HepG2 (cell line): ENCODE measurements at regions of chr11 and their contacts with region 1.

Region 1: GRCh38 chr11:102007567-102008437 is 39.4 kb upstream of the CFAP300 start:
- DNase-seq: peak; percentile 88
- ATAC-seq: peak; percentile 92
- H3K4me3 ChIP-seq: no peak overlapping the region; a peak in 1 of 6 replicates
- H3K27ac ChIP-seq: peak overlapping the region; percentile 51
- H3K4me1 ChIP-seq: peaks cover 35% of the 10 kb centered on the region
- H3K27me3 ChIP-seq: no peaks in the 10 kb centered on the region
- CTCF ChIP-seq: peak; percentile 68
- EP300 ChIP-seq: peak in 1 of 2 experiments; percentile 47; a peak in 1 of 4 replicates
- POLR2A ChIP-seq: no peak
- RAD21 ChIP-seq: peak; percentile 72

Region 2: DNA sequence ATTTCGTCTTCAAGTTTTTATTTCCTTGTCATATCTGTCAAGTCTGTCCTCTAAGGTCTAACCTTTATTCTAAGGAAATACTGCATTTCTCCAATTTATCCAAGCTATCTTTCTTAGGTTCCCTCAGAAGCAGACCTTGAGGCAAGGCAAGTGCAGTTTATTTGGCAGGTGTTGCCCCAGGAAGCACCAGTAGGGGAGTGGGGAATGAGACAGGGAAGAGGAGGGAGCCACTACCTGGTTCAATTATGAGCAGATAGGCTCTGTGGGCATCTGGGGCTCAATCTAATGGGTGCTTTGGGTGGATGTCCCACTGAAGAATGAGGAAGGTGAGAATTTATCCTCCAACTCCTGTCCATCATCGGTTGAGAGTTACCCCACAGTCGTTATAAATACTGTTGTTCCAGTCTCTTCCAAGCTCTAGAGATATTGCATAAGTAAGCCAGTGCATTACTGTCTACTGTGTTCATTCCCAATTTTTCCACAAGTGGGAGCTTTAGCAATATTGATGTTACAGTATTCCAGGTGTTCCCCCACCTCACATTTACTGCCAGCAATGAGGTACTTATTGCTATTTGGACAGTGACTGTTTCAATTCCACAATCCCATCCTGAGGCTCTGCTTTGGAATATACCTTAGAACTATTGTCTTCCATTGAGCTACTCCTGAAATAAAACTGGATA is 247.9 kb before region 1 on chr11:
- CTCF ChIA-PET with region 1: no interaction called
- POLR2A ChIA-PET with region 1: no interaction called
- in situ Hi-C with region 1: no loop called
- intact Hi-C with region 1: loop called (anchors 1 kb)
- DNase-seq: peak; percentile 35
- ATAC-seq: peak; percentile 87
- H3K4me3 ChIP-seq: no peak overlapping the region
- H3K27ac ChIP-seq: no peak overlapping the region
- H3K4me1 ChIP-seq: no peaks in the 10 kb centered on the region
- H3K27me3 ChIP-seq: no peaks in the 10 kb centered on the region
- CTCF ChIP-seq: peak; percentile 56
- EP300 ChIP-seq: no peak
- POLR2A ChIP-seq: no peak
- RAD21 ChIP-seq: no peak; the same call in 1 of the 2 replicates

Region 3: GRCh38 chr11:101860696-101861427 is 146.9 kb before region 1 on chr11:
- CTCF ChIA-PET with region 1: interaction called, 42 read pairs
- POLR2A ChIA-PET with region 1: interaction called, 7 read pairs
- in situ Hi-C with region 1: loop called (anchors 5 kb)
- intact Hi-C with region 1: loop called (anchors 1 kb)
- DNase-seq: peak; percentile 56
- ATAC-seq: peak; percentile 84
- H3K4me3 ChIP-seq: no peak overlapping the region
- H3K27ac ChIP-seq: no peak overlapping the region
- H3K4me1 ChIP-seq: peaks cover 44% of the 10 kb centered on the region
- H3K27me3 ChIP-seq: no peaks in the 10 kb centered on the region
- CTCF ChIP-seq: peak; percentile 84
- EP300 ChIP-seq: no peak
- POLR2A ChIP-seq: no peak
- RAD21 ChIP-seq: peak; percentile 57

Region 4: DNA sequence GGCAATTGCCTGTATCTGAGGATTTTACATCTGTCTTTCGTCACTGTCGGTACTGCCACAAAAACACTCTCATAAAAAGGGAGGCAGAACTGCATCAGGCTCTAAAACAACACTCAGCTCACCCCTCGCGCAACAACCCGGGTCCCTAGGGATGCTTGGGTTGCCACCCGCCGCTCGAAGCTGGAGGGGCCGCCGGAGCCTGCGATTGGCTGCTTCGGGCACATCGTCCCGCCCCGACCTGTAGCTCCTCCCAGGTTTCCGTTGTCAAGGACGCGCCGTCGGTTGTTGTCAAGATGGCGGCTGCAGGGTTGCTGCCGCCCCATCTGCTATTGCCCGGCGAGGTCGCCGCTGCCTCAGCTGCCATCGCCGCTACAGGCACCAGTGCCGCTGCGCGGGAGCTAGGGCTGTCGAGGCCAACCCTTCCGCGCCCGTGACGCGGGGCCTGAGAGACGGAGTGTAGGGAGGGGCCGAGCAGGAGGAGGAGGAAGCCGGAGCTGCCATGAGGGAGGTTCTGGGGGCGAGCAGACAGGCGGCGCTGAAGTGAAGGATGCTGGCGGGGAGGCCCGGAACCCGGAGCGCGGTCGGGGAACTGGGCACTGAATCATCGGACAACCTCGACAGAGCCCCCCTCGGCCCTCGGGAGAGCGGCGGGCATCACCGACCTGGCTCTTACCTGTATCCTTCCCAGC is 92.9 kb before region 1 on chr11 and contains the start of gene CEP126:
- CTCF ChIA-PET with region 1: interaction called, 3 read pairs
- POLR2A ChIA-PET with region 1: interaction called, 12 read pairs
- in situ Hi-C with region 1: loop called (anchors 10 kb)
- intact Hi-C with region 1: loop called (anchors 1 kb)
- DNase-seq: peak; percentile 84
- ATAC-seq: peak; percentile 95
- H3K4me3 ChIP-seq: peak within 1 kb of the TSS; percentile 78 to 85 (median 84)
- H3K27ac ChIP-seq: peak within 1 kb of the TSS; percentile 67
- H3K4me1 ChIP-seq: peaks cover 34% of the 10 kb centered on the region
- H3K27me3 ChIP-seq: no peaks in the 10 kb centered on the region
- CTCF ChIP-seq: peak; percentile 84
- EP300 ChIP-seq: no peak
- POLR2A ChIP-seq: peak; percentile 42; a peak in 3 of 4 replicates
- RAD21 ChIP-seq: peak; percentile 71
- total RNA-seq, gene CEP126: 1.4 and 1.8 TPM in 2 replicates

Region 5: GRCh38 chr11:101996111-101996510 is 11.7 kb before region 1 on chr11:
- CTCF ChIA-PET with region 1: no interaction called
- POLR2A ChIA-PET with region 1: interaction called, 3 read pairs
- in situ Hi-C with region 1: no loop called
- intact Hi-C with region 1: loop called (anchors 1 kb)
- DNase-seq: peak; percentile 60
- ATAC-seq: peak; percentile 12; the same call in 1 of the 3 replicates
- H3K4me3 ChIP-seq: no peak overlapping the region
- H3K27ac ChIP-seq: no peak overlapping the region
- H3K4me1 ChIP-seq: peaks cover 45% of the 10 kb centered on the region
- H3K27me3 ChIP-seq: no peaks in the 10 kb centered on the region
- CTCF ChIP-seq: no peak
- EP300 ChIP-seq: no peak
- POLR2A ChIP-seq: no peak
- RAD21 ChIP-seq: no peak